Heart right ventricle (tissue), 16 donors: ENCODE measurements at regions of chr11 and their contacts with region 1.

Region 1: DNA sequence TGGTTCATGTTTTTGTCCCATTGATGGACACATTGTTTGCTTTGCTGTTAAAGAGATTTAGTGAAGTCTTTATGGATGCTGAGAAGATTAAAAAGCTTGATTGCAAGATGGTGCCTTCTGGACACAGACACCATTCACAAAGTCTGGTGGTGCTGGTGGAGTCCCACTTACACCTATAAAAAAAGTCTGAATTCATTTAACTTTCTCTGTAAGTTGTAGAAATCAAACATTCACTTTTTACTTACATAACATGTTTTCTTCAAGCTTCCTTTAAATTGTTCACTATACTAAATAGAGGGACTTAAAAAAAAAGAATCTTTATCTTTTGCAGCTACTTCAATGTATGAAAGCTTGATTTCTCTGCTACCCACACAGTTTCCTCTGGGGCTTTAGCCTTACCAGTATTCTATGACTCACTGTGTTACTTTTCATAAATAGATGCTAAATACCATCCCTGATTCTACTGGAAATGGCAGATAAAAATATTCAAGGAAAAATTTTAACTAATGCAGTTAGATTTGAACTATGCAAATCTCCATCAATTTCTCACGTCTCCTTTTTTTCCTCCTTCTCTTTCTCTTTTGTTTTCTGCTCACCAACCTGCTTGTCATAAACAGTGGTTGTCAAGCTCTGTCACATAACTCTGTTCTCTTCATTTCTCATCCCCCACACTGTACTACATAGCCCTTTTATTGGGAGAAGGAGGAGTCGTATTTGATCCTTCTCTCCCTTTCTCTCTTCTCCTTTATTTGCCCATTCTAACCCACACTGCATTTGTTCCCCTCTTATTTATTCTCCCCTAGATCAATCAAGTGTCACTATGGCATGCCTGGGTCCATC is 89.7 kb downstream of the FAM76B start:
- DNase-seq: no peak
- ATAC-seq: no peak
- H3K4me3 ChIP-seq: no peak overlapping the region
- H3K27ac ChIP-seq: peak overlapping the region in 3 of 10 donors; percentile 32 to 75 (median 46)
- H3K4me1 ChIP-seq: peaks cover 0 to 61% (median 17%) of the 10 kb centered on the region in 9 donors
- H3K27me3 ChIP-seq: no peaks in the 10 kb centered on the region
- CTCF ChIP-seq: no peak

Region 2: DNA sequence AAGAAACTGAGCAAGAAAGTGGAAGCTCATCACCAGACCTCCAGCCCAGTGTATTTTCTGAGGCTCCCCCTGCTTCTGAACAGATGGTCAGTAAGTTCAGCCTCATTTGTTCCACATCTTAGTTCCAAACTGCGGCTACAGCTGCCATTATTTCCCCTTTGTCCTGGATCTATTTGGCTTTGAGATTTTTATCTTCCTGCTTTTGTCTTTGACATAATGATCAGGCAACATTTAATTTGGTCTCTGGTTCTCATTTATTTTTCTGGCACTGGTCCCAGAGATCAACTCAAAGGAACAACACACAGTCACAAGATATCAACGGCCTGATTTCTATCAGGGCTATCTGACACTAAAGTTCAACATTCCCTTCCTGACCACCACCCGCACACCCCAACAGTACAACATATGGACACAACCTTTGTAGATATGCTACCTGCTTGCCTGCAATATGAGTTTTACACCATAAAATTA is 47.8 kb before region 1 on chr11:
- intact Hi-C with region 1: loop called in 1 of 10 experiments (anchors 5 kb)
- DNase-seq: peak in 1 of 2 donors; percentile 18
- ATAC-seq: peak in 7 of 8 donors; percentile 27 to 90 (median 81)
- H3K4me3 ChIP-seq: no peak overlapping the region
- H3K27ac ChIP-seq: peak overlapping the region in 6 of 10 donors; percentile 13 to 51 (median 28)
- H3K4me1 ChIP-seq: peaks cover 0 to 18% (median 8%) of the 10 kb centered on the region in 9 donors
- H3K27me3 ChIP-seq: no peaks in the 10 kb centered on the region
- CTCF ChIP-seq: no peak